K562 (cell line): ENCODE measurements at regions of chr11 and their contacts with region 1.

Region 1: GRCh38 chr11:111601979-111602864 is at the start of gene SIK2:
- DNase-seq: peak; percentile 95 to 96 (median 96)
- ATAC-seq: peak; percentile 93
- H3K4me3 ChIP-seq: peak within 1 kb of the TSS; percentile 66
- H3K27ac ChIP-seq: peak within 1 kb of the TSS; percentile 84
- H3K4me1 ChIP-seq: peaks cover 14 to 17% of the 10 kb centered on the region in 2 experiments; a peak in 4 of 5 replicates
- H3K27me3 ChIP-seq: no peaks in the 10 kb centered on the region
- CTCF ChIP-seq: peak; percentile 90 to 97 (median 96)
- EP300 ChIP-seq: no peak
- POLR2A ChIP-seq: peak; percentile 18; the same call in 1 of the 2 replicates
- RAD21 ChIP-seq: peak; percentile 99
- polyA plus RNA-seq, gene SIK2: 0.74 to 0.77 TPM

Region 2: GRCh38 chr11:111296196-111296595 is 306.0 kb before region 1 on chr11:
- CTCF ChIA-PET with region 1: no interaction called
- POLR2A ChIA-PET with region 1: no interaction called
- in situ Hi-C with region 1: no loop called
- intact Hi-C with region 1: no loop called
- DNase-seq: no peak
- ATAC-seq: no peak
- H3K4me3 ChIP-seq: no peak overlapping the region
- H3K27ac ChIP-seq: no peak overlapping the region
- H3K4me1 ChIP-seq: peaks cover 0 to 9% of the 10 kb centered on the region in 2 experiments; a peak in 1 of 5 replicates
- H3K27me3 ChIP-seq: peaks cover 2 to 28% of the 10 kb centered on the region in 2 experiments; a peak in 3 of 5 replicates
- CTCF ChIP-seq: no peak
- EP300 ChIP-seq: no peak
- POLR2A ChIP-seq: no peak
- RAD21 ChIP-seq: no peak

Region 3: DNA sequence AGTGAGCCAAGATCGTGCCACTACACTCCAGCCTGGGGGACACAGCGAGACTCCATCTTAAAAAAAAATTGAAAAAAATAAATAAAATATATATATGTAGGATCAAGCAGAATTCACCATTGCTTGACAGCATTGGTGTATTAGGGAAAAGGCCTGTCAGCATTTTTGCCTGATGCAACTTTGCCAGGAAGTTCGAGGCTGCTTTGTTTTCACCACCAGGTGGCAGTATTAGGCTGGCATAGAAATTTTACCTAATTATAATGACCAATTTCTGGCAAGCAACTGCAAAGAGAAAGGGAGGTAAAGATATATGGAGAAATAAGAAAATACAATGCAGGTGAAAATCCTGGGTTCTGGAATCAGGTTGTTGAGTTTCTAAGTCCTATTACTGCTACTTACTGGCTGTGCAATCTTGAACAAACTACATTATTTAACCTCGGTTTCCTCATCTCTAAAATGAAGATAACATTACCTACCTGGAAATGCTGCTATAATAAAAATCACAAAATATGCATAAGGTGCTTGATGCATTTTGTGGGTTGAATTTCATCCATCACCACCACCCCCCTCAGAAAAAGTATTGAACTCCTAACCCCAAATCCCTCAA is 37.0 kb before region 1 on chr11:
- CTCF ChIA-PET with region 1: no interaction called
- POLR2A ChIA-PET with region 1: interaction called, 3 read pairs
- in situ Hi-C with region 1: no loop called
- intact Hi-C with region 1: loop called (anchors 5 kb)
- DNase-seq: peak; percentile 62 to 77 (median 70)
- ATAC-seq: peak; percentile 80
- H3K4me3 ChIP-seq: no peak overlapping the region
- H3K27ac ChIP-seq: no peak overlapping the region
- H3K4me1 ChIP-seq: no peaks in the 10 kb centered on the region; a peak in 1 of 5 replicates
- H3K27me3 ChIP-seq: no peaks in the 10 kb centered on the region; a peak in 1 of 5 replicates
- CTCF ChIP-seq: peak; percentile 72 to 89 (median 76)
- EP300 ChIP-seq: 0 out of 2 replicates have a peak, but pooled peaks have one; percentile 17
- POLR2A ChIP-seq: no peak
- RAD21 ChIP-seq: peak; percentile 82 to 86

Region 4: DNA sequence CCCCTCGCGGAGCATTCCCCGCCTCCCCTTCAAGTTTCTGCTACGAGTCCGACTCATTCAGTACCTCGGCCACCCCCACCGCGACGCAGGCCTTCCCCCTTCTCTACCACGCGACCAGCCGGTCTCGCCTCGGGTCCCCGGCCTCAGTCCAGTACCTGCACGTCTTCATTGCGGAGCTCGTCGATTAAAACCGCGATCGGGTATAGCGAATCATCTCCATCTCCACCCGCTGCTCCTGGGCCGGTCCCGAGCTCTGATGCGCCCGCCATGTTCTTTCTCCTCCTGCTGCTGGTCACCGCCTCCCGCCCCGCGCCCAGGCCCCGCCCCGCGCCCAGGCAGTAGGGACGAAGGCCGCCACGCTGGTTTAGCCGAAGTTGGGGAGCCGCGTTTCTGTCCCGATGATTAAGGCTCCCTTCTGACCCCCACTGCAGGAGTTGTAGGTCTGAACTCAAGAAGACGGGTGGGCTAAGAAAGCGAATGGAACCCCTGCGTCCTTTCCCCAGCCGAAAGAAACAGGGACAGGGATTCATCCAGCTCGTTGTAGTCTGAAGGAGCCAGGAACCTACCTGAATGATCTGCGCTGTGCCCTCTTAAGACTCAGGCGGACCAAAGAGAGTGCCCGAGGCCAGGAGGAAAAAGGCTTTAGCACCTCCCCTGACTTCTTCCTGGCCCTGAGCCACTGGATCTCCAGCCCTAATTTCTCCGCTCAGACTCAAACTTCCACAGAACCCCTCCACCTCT is 164.0 kb after region 1 on chr11 and contains the start of gene PPP2R1B:
- CTCF ChIA-PET with region 1: interaction called, 4 read pairs
- POLR2A ChIA-PET with region 1: interaction called, 11 read pairs
- in situ Hi-C with region 1: no loop called
- intact Hi-C with region 1: no loop called
- DNase-seq: peak; percentile 78 to 96 (median 95)
- ATAC-seq: peak; percentile 96
- H3K4me3 ChIP-seq: peak within 1 kb of the TSS; percentile 84
- H3K27ac ChIP-seq: peak within 1 kb of the TSS; percentile 90
- H3K4me1 ChIP-seq: peaks cover 7% of the 10 kb centered on the region in 2 experiments; a peak in 2 of 5 replicates
- H3K27me3 ChIP-seq: no peaks in the 10 kb centered on the region
- CTCF ChIP-seq: no peak
- EP300 ChIP-seq: no peak
- POLR2A ChIP-seq: peak; percentile 92
- RAD21 ChIP-seq: no peak
- polyA plus RNA-seq, gene PPP2R1B: 50.9 to 68.5 TPM

Region 5: DNA sequence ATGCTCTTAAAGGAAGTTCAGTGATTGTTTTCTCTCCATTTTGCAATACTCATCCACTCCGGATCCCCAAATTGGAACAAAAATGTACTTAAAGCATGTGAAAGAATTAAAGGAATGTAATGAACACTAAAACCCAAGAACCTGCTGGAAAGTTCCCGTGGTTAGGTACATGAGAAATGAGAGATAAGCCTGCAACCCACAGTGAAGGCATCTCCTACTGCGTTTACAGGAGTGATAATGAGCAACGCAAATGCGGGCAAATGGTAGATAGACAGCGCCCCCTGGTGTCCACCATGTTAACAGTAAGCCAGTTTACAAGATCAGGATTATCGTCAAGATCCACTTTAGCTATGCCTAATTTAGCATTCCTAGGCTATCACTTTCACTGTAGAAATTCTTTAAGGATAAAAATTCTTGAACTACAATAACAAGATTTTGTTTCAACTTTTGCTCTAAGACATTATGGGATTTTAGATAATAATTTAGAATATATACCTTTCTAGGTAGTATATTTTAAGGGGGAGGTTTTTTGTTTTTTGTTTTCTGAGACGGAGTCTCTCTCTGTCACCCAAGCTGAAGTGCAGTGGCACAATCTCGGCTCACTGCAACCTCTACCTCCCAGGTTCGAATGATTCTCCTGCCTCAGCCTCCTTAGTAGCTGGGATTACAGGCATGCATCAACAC is 239.3 kb after region 1 on chr11:
- CTCF ChIA-PET with region 1: interaction called, 19 read pairs
- POLR2A ChIA-PET with region 1: interaction called, 3 read pairs
- in situ Hi-C with region 1: loop called (anchors 5 kb)
- intact Hi-C with region 1: loop called (anchors 1 kb)
- DNase-seq: peak; percentile 67 to 92 (median 74)
- ATAC-seq: peak; percentile 99
- H3K4me3 ChIP-seq: no peak overlapping the region
- H3K27ac ChIP-seq: no peak overlapping the region
- H3K4me1 ChIP-seq: peaks cover 0 to 3% of the 10 kb centered on the region in 2 experiments; a peak in 2 of 5 replicates
- H3K27me3 ChIP-seq: no peaks in the 10 kb centered on the region
- CTCF ChIP-seq: peak; percentile 88 to 93 (median 91)
- EP300 ChIP-seq: peak; percentile 30
- POLR2A ChIP-seq: no peak
- RAD21 ChIP-seq: peak; percentile 91 to 97

Region 6: GRCh38 chr11:112219476-112220232 is 617.4 kb after region 1 on chr11:
- CTCF ChIA-PET with region 1: no interaction called
- POLR2A ChIA-PET with region 1: no interaction called
- in situ Hi-C with region 1: loop called (anchors 10 kb)
- intact Hi-C with region 1: no loop called
- DNase-seq: peak; percentile 66 to 84 (median 72)
- ATAC-seq: peak; percentile 99
- H3K4me3 ChIP-seq: no peak overlapping the region
- H3K27ac ChIP-seq: no peak overlapping the region
- H3K4me1 ChIP-seq: peaks cover 0 to 4% of the 10 kb centered on the region in 2 experiments; a peak in 1 of 5 replicates
- H3K27me3 ChIP-seq: no peaks in the 10 kb centered on the region
- CTCF ChIP-seq: peak; percentile 71 to 93 (median 78)
- EP300 ChIP-seq: no peak
- POLR2A ChIP-seq: no peak
- RAD21 ChIP-seq: peak; percentile 92 to 96